Activated B cell treated with CpG ODN at 0.5 μM for 24 hours (primary cell): ENCODE measurements at regions of chr1 and their contacts with region 1.

Region 1: DNA sequence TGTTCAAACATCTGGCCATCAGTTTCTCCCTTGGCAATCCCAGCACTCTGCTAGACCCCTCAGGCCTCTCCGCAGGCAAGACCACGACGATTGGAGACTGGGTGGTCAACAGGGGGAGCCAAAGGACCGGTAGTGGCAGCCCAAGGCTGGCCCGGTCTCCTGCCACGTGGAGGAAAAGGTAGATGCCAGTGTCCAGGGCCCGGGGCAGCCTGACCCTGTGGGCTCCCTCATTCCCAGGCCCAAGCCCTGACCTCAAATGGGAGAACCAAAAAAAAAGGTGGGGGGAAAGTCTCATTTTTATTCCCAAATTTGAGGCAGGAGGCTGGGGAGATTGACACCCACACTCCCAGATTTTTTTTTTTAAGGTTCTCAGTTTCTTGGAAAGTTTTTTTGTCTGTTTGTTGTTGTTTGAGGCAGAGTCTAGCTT is 24.8 kb downstream of the S100A6 start:
- DNase-seq: peak; percentile 67
- ATAC-seq: peak; percentile 97
- H3K4me3 Mint-ChIP-seq: no peak overlapping the region
- H3K27ac Mint-ChIP-seq: no peak overlapping the region
- H3K4me1 Mint-ChIP-seq: peaks cover 4% of the 10 kb centered on the region
- H3K27me3 Mint-ChIP-seq: no peaks in the 10 kb centered on the region
- CTCF ChIP-seq: peak; percentile 81

Region 2: DNA sequence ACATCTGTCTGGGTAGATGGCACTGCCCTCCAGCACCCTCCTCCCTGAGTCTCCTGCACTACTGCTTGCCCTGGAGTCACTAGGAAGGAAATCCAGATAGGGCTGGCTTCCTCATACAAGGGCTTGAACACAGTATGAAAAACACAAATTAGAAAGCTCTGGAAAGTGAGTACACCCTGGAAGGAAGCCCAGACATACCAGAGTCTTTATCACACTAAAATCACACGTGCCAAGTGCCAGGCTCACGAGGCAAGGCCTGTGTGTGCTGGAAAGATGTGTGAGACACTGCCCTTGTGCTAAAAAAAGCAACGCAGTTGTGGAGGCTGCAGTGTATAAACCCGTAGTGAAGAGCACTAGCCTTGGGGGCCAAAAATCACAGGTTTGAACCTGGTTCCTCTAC is 22.3 kb before region 1 on chr1:
- CTCF ChIA-PET with region 1: no interaction called
- POLR2A ChIA-PET with region 1: no interaction called
- intact Hi-C with region 1: no loop called
- DNase-seq: no peak
- ATAC-seq: no peak
- H3K4me3 Mint-ChIP-seq: no peak overlapping the region
- H3K27ac Mint-ChIP-seq: no peak overlapping the region
- H3K4me1 Mint-ChIP-seq: no peaks in the 10 kb centered on the region
- H3K27me3 Mint-ChIP-seq: peaks cover 38% of the 10 kb centered on the region
- CTCF ChIP-seq: no peak

Region 3: DNA sequence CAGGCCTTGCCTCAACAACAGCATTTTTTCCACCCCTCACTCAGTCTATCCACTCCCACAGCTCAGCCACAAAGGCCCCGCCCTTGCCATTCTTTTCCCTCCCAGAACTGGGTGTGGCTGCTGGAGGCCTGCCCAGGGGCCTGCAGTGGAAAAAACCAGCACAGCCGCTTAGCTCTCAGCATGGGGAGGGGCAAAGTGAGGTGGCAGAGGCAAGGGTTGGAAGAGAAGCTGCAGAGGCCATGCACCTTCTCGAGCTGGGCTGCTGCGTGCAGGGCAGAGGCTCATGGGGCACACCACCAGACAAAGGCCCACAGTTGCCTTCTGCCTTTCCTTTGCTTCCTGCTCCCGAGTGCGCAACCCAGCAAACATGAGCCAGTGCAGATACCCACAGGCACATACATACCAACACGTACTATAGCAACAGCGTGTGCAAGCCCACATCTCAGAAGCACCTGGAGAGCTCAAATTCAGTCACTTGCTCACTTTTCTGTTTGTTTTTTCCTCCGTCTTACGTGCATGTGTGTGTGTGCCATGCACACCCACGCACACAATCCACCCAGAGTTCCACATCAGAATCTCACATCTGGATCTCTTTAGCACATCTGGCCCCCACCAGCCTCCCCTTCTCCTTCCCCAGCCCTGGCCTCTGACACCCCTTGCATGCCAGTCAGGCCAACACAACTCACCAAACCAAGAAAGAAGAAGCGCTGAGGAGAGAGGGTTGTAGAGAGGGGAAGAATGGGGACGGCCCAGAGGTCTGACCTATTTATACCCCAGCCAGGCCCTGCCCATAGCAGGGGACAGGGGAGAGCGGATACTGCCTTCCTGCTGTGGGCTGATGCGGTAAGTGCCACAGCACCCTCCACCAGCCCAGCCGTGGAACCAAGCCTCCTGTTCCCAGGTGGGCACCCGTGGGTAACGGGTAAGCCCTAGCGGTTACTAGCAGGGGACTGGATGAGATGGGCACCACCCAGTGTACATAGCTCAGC is 34.4 kb after region 1 on chr1 and contains the start of gene S100A4:
- CTCF ChIA-PET with region 1: interaction called, 22 read pairs
- POLR2A ChIA-PET with region 1: no interaction called
- intact Hi-C with region 1: no loop called
- DNase-seq: peak; percentile 56
- ATAC-seq: peak; percentile 78
- H3K4me3 Mint-ChIP-seq: peak within 1 kb of the TSS; percentile 95
- H3K27ac Mint-ChIP-seq: peak within 1 kb of the TSS; percentile 97
- H3K4me1 Mint-ChIP-seq: peaks cover 58% of the 10 kb centered on the region
- H3K27me3 Mint-ChIP-seq: peaks cover 2% of the 10 kb centered on the region
- CTCF ChIP-seq: no peak
- total RNA-seq, gene S100A4: 315 and 398 TPM in 2 replicates

Region 4: DNA sequence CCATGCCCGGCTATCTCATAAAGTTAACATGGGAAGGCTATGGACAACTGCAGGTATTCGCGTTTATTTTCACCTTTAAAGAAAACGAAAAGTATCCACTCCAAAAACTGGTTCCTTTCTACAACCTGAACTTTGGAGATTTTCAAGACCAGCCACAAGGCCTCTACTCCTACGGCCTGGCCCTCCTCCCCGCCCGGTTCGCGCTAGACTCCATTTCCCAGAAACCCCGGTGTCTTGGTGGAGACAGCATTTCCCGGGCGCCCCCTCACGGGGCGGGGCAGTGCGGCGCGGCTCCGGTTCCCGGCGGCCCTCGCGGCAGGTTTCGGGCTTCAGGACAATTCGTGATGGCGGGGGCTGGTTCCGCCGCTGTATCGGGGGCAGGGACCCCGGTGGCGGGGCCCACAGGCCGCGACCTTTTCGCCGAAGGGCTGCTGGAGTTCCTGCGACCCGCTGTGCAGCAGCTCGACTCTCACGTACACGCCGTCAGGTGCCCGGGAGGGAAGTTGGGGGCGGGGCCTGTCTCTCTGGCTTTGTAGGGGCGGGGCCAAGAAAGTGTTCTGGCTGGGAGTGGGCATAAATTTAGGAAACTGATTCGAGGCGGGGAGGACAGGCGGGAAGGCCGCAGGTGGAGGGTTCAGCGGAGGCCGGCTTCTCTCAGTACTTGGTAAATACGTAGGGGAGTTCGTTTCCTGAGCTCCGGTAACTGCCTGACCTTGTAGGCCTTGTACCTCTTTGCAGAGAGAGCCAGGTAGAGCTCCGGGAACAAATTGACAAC is 147.6 kb after region 1 on chr1 and contains the start of gene SNAPIN:
- CTCF ChIA-PET with region 1: no interaction called
- POLR2A ChIA-PET with region 1: no interaction called
- intact Hi-C with region 1: loop called (anchors 2 kb)
- DNase-seq: peak; percentile 94
- ATAC-seq: peak; percentile 99
- H3K4me3 Mint-ChIP-seq: peak within 1 kb of the TSS; percentile 96
- H3K27ac Mint-ChIP-seq: peak within 1 kb of the TSS; percentile 91
- H3K4me1 Mint-ChIP-seq: peaks cover 14% of the 10 kb centered on the region
- H3K27me3 Mint-ChIP-seq: no peaks in the 10 kb centered on the region
- CTCF ChIP-seq: no peak
- total RNA-seq, gene SNAPIN: 50.4 and 51.5 TPM in 2 replicates

Region 5: DNA sequence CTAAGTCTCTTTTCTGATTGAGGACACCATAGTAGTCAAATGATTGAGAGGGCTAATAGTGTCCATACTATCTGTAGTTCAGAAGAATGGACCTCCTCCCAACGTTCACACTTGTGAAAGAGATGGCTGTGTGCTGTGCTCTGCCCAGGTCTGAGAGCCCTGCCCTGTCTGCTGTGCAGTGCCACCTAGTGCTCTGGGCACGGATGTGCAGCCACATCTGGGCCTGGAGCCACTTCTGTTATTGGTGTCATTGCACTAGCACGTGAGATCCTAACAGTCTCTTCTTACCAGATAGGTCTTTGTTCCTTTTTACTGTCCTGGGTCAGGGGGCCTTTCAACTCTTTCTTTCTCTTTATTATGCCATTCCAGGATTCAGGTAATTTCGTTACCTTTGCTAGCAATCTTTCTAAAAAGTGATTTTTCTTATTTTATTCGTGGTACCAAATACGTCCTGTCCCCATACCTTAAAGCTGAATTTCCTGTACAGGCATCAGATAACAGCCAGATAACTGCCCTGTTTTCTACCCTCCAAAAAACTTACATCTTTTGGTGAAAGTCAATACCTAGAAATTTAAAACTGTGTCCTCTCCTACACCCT is 238.5 kb after region 1 on chr1:
- CTCF ChIA-PET with region 1: interaction called, 13 read pairs
- POLR2A ChIA-PET with region 1: no interaction called
- intact Hi-C with region 1: loop called (anchors 1 kb)
- DNase-seq: peak; percentile 60
- ATAC-seq: peak; percentile 100
- H3K4me3 Mint-ChIP-seq: no peak overlapping the region
- H3K27ac Mint-ChIP-seq: peak overlapping the region; percentile 3
- H3K4me1 Mint-ChIP-seq: peaks cover 14% of the 10 kb centered on the region
- H3K27me3 Mint-ChIP-seq: no peaks in the 10 kb centered on the region
- CTCF ChIP-seq: no peak

Region 6: GRCh38 chr1:153816283-153816889 is 305.4 kb after region 1 on chr1:
- CTCF ChIA-PET with region 1: no interaction called
- POLR2A ChIA-PET with region 1: no interaction called
- intact Hi-C with region 1: loop called (anchors 1 kb)
- DNase-seq: no peak
- ATAC-seq: no peak
- H3K4me3 Mint-ChIP-seq: no peak overlapping the region
- H3K27ac Mint-ChIP-seq: no peak overlapping the region
- H3K4me1 Mint-ChIP-seq: peaks cover 3% of the 10 kb centered on the region
- H3K27me3 Mint-ChIP-seq: no peaks in the 10 kb centered on the region
- CTCF ChIP-seq: no peak